ENCODE measurements at regions of chr13 and their contacts with region 1.

Region 1: DNA sequence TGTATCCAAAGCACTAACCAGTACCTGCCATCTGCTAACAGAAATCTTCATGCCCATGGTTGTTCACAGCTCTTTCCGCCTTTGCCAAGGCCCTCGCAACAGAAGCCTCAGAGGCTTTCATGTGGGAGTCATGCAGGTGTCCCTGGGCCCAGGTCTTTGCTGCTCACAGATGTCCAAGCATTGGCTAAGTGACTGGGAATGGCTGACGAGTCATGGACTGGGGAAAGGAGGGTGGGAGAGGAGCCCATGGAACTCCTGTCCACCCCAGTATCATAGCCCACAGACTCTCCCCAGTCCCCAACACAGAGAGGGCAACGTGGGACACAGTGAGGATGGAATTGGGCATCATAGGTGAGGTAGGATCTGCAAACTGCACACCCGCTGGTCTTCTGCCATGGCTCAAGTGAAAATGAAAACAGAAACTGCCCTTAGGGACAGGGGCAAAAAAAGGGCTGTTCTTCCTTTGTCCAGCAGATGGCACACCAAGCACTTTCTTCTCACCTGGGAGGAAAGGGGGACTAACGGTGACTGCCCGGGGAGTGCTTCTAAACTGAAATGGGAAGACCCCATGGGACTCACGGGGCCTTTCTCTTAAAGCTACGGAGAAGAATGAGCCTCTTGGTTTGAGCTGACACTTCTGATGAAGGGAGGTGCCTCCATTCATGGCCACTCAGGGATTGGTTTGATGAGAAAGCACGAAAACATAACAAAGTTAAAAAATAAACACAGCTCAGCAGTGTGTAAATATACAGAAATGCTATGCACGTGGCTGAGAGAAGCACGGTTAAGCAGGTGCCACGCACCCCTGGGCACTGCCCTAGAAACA is 11.1 kb upstream of the DHRS12 start:
- DNase-seq: peak; percentile 90
- H3K4me3 ChIP-seq: peak overlapping the region; percentile 47
- H3K27ac ChIP-seq: peak overlapping the region; percentile 39
- H3K4me1 ChIP-seq: peaks cover 82% of the 10 kb centered on the region
- CTCF ChIP-seq: peak; percentile 96

Region 2: GRCh38 chr13:51825165-51825592 is 10.1 kb after region 1 on chr13:
- CTCF ChIA-PET with region 1: interaction called, 29 read pairs
- POLR2A ChIA-PET with region 1: interaction called, 147 read pairs
- intact Hi-C with region 1: no loop called
- DNase-seq: peak; percentile 72
- H3K4me3 ChIP-seq: peak overlapping the region; percentile 25
- H3K27ac ChIP-seq: peak overlapping the region; percentile 95
- H3K4me1 ChIP-seq: peaks cover 100% of the 10 kb centered on the region
- CTCF ChIP-seq: no peak

Region 3: DNA sequence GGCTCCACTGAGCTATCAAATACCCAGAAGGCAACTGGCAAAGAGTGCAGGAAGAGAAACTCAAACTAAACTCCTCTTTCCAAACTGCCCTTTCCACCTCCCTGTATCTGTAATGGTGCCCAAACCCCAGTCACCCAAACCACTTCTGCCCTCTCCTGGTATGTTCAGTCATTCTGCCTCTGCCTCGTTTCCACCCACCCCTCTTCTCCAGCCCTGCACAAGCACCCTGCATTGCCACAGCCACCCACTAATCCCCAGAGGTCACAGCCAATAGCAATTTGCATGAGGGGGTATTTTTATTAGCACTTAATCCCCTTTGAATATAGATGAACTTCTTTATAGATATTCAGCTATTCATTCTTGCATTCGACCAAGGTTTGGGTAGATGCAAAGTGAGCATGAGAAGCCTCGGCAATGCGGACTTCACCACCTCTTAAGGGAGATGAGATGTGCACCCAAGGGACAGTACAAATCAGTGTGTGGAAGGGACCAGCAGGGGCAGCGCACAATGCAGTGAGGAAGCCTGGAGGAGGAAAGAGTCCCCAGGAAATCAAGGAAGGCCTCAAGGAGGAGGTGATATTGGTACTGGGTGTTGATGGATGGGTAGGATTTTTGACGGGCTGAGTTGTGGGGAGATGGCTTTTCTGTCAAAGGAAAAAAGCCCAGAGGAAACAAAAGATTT is 17.6 kb after region 1 on chr13:
- CTCF ChIA-PET with region 1: interaction called, 79 read pairs
- POLR2A ChIA-PET with region 1: interaction called, 147 read pairs
- intact Hi-C with region 1: loop called (anchors 1 kb)
- DNase-seq: peak; percentile 83
- H3K4me3 ChIP-seq: peak overlapping the region; percentile 41
- H3K27ac ChIP-seq: peak overlapping the region; percentile 95
- H3K4me1 ChIP-seq: peaks cover 76% of the 10 kb centered on the region
- CTCF ChIP-seq: peak; percentile 88

Region 4: GRCh38 chr13:51849145-51850101 is 34.4 kb after region 1 on chr13:
- CTCF ChIA-PET with region 1: interaction called, 7 read pairs
- POLR2A ChIA-PET with region 1: interaction called, 4 read pairs
- intact Hi-C with region 1: loop called (anchors 1 kb)
- DNase-seq: peak; percentile 62
- H3K4me3 ChIP-seq: no peak overlapping the region
- H3K27ac ChIP-seq: no peak overlapping the region
- H3K4me1 ChIP-seq: peaks cover 3% of the 10 kb centered on the region
- CTCF ChIP-seq: peak; percentile 91

Region 5: GRCh38 chr13:52001120-52001731 is 186.2 kb after region 1 on chr13:
- CTCF ChIA-PET with region 1: no interaction called
- POLR2A ChIA-PET with region 1: no interaction called
- intact Hi-C with region 1: loop called (anchors 5 kb)
- DNase-seq: peak; percentile 75
- H3K4me3 ChIP-seq: no peak overlapping the region
- H3K27ac ChIP-seq: no peak overlapping the region
- H3K4me1 ChIP-seq: no peaks in the 10 kb centered on the region
- CTCF ChIP-seq: peak; percentile 85

Region 6: DNA sequence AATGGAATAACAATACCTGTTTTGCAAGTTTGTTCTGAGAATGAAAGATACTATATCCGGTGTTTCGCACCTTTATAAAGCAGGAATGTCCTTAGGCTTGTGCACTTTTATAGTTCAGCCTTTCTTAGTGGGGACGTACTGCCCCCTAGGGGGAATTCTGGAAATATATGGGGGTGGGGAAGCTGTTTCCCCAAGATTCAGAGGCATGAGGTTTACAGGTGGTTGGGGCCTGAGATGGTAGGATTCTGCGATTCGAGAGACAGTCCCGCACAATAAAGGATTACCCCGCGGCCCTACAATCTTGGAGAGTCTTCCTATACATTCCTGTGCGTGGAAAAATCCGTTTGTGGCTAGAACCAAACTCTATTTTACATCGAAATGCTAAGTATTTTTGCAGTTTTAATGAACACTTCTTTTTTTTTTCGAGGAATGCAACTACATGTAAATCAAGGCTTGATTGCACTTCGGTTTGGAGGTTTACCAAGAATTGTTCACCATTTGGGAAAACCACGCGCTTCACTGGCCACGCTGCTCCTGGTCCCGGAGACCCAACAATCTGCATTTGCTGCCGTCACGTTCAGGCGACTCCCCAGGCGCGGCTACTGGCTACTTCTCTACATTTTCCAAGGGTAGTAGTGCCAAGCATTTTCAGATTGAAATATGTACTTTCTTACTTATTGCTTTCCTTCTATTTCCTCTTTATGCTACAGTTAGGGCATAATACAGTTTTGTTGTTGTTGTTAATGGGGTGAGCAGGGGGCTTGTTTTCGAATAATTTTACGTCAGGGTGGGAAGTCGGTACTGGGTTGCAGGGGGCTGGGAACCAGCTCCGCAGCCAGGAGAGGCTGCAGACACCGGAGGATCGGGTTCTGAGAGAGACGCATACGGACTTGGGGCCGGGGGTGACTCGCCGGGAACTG is 313.0 kb after region 1 on chr13:
- CTCF ChIA-PET with region 1: no interaction called
- POLR2A ChIA-PET with region 1: no interaction called
- intact Hi-C with region 1: loop called (anchors 2 kb)
- DNase-seq: peak; percentile 64
- H3K4me3 ChIP-seq: no peak overlapping the region
- H3K27ac ChIP-seq: no peak overlapping the region
- H3K4me1 ChIP-seq: no peaks in the 10 kb centered on the region
- CTCF ChIP-seq: peak; percentile 94